Prostate gland (tissue), 2 donors: ENCODE measurements at regions of chr2 and their contacts with region 1.

Region 1: DNA sequence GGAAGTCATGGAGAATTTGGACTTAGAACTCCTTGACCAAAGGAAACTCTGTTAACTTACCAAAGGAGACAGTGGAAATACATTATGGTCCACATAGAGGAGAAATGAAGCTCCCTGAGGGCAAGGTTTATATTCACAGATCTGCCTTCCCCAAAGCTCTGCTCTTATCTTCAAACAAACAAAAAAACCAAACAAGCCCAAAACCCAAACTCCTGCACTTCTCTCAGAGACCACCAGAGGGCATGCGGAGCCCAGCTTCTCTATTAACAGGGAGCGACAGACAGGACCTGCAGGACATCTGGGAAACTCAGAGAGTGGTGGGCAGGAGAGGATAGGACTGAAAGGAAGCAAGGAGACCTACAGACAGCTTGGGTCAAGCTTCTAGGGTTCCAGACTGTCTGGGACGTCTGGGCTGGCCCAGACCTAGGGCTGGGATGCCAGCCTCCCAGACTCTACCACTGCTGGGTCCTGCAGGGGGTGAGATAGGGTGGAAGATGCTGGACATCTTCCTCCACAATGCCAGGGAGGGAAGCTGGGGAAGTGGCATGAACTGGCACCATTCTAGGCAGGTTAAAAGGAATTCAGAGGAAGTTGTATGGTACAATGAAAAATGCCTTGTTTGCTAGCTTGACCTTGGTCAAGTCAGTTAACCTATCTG is 4.0 kb upstream of the WNT10A start:
- DNase-seq: peak; percentile 52
- H3K4me3 ChIP-seq: no peak overlapping the region
- H3K27ac ChIP-seq: no peak overlapping the region
- H3K4me1 ChIP-seq: no peaks in the 10 kb centered on the region
- H3K27me3 ChIP-seq: peaks cover 15% of the 10 kb centered on the region
- CTCF ChIP-seq: peak; percentile 84 to 95 (median 91)
- POLR2A ChIP-seq: no peak

Region 2: DNA sequence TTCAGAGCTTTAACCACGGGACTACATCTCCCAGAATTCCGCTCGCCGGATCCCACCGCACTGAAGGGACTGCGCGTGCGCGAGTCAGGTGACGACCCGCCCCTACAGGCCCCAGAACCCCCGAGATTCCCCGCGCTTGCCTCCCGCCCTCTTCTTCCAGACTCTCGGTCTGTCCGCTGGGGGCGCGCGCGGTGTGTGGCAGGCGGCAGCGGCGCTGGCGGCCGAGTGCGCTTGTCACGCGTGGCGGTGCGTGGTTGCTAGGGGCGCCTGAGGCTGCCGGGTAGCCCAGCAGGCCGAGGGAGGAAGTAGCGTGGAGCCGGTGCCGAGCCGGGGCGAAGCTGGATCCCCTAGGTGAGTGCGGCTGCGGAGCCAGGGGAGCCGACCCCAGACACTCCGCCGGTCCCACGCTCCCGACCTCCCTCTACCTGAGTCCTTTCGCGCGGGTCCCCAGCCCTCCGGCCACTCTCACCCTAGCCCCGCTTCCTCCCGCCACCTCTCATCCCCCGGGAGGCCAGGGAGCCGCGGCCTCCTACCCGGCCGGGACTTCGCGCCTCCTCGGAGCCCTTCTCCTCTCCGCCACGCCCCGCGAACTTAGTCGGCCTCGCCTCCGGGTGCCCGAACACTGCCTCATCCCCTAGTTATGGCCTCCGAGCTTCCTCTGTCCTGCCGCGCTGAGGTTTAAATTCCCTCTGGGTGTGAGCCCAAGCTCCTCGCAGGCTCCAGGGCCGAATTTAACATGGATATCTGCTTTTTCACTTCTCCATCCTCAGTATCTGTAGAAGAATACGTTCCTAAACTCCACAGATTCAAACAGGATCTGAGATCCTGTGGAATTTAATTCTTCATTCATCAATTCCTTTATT is 165.8 kb before region 1 on chr2 and contains the start of gene TTLL4:
- intact Hi-C with region 1: no loop called
- DNase-seq: peak; percentile 97
- H3K4me3 ChIP-seq: peak within 1 kb of the TSS; percentile 69 to 78
- H3K27ac ChIP-seq: peak within 1 kb of the TSS; percentile 93 to 95
- H3K4me1 ChIP-seq: no peaks in the 10 kb centered on the region
- H3K27me3 ChIP-seq: no peaks in the 10 kb centered on the region
- CTCF ChIP-seq: peak; percentile 89 to 99 (median 93)
- POLR2A ChIP-seq: peak; percentile 87
- total RNA-seq, gene TTLL4: 21.1 to 63.8 TPM

Region 3: DNA sequence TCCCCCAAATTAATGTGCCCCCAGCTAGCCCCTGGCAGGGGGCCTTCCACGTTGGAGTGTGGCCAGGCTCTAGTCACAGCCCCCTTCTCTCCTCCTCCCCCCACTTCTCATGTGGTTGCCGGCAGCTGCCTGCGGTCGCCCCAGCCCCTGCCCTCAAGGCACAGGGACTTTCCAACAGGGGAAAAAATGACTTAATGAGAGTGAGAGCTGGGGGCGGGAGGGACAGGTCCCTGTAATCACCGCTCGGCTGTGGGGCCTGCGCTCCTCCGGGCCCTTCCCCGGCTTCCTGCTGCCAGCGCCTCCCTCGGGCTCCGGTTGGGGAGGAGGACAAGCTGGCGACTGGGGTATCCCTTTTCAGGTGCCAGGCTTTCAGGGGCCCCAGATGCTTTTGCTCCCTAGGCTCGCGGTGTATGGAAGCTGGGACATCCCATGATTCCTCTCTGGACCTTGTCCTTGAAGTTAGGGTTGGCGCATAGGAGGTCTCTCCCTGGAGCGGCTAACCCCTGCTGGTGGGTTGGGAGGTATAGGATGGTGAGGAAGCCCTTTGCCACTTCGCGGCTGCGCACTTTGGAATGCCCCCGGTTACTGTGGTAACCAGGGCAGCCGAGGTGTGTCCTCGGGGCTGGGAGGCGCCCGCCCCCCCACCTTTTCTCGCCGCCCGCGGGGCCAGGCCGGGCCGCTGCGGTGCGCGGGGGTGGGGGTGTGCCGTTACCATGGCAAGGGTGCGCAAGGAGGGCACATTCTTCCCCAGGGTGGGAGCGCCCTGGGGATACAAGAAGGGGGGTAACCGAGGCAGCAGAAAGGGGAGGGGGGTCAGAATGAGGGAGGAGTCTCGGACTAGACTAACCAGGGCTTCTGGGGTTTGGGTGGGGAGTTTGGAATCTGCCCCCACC is 20.1 kb after region 1 on chr2:
- intact Hi-C with region 1: loop called (anchors 1 kb)
- DNase-seq: no peak
- H3K4me3 ChIP-seq: no peak overlapping the region
- H3K27ac ChIP-seq: no peak overlapping the region
- H3K4me1 ChIP-seq: no peaks in the 10 kb centered on the region
- H3K27me3 ChIP-seq: peaks cover 19% of the 10 kb centered on the region
- CTCF ChIP-seq: no peak
- POLR2A ChIP-seq: peak; percentile 7